PC-9 (cell line): ENCODE measurements at regions of chr9 and their contacts with region 1.

Region 1: GRCh38 chr9:112112941-112113681 is 62.0 kb downstream of the SUSD1 start:
- DNase-seq: peak; percentile 73 to 87
- H3K4me3 ChIP-seq: no peak overlapping the region
- H3K27ac ChIP-seq: peak overlapping the region; percentile 95
- H3K4me1 ChIP-seq: peaks cover 62% of the 10 kb centered on the region
- H3K27me3 ChIP-seq: no peaks in the 10 kb centered on the region
- CTCF ChIP-seq: peak; percentile 85

Region 2: DNA sequence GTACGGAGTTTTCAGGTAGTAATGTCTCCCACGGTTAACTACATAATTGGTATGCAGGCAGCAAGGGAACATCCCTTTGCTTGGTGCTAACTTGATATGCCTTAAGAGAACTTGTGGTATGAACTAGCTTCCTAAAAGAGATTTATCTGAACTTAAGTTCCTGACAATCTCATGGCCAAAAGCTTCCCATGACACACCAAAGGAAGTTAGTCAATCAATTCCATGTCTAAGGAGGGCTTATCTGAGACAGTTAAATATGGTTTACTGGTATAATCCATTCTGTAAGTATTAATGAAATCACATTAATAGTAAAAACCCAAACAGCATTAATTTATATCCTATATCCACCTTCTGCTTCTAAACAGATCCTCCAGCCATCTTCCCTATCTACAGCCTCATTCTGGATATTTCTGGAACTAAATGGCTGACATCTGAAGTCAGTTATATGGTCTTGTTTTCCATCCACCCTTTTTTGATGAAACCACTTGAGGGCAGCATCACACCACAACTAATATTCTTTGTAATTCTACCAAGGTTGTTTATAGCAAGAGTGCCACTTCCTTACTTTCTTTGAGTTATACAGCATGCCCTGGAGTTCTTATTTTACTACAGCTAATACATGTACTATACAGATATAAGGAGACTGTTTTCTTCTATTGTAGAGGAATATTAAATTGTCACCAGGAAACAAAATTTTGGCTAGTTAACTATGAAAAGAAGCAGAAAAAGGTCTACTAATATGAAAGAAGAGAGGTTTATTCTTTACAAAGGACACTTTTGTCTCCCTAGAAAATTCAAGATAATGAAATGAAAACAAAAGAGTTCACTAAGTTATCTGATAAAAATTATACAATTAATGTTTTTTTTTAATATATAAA is 353.1 kb before region 1 on chr9:
- CTCF ChIA-PET with region 1: interaction called, 4 read pairs
- POLR2A ChIA-PET with region 1: no interaction called
- intact Hi-C with region 1: loop called (anchors 1 kb)
- DNase-seq: peak; percentile 53 to 73
- H3K4me3 ChIP-seq: no peak overlapping the region
- H3K27ac ChIP-seq: no peak overlapping the region
- H3K4me1 ChIP-seq: peaks cover 6% of the 10 kb centered on the region; the same call in 1 of the 2 replicates
- H3K27me3 ChIP-seq: no peaks in the 10 kb centered on the region
- CTCF ChIP-seq: peak; percentile 81

Region 3: DNA sequence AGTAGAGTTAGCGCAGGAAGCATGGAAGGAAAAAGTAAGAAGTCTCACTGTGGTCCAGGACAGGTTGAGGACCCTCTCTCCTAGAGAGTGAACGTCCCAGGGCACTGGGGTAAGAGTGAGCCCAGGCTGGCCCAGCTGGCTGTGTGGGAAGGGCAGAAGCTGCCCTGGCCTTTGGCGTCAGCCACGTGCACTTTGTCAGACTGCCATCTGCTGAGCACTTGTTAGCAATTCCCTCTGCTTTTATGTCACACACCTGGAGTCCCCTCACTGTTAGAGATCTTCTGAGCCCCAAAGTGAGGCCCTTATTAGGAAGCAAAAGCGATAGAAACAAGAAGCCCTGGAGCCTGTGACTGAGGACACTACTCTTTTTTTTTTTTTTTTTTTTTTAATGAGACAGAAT is 137.4 kb before region 1 on chr9:
- CTCF ChIA-PET with region 1: no interaction called
- POLR2A ChIA-PET with region 1: no interaction called
- intact Hi-C with region 1: no loop called
- DNase-seq: no peak
- H3K4me3 ChIP-seq: no peak overlapping the region
- H3K27ac ChIP-seq: no peak overlapping the region
- H3K4me1 ChIP-seq: peaks cover 17% of the 10 kb centered on the region
- H3K27me3 ChIP-seq: no peaks in the 10 kb centered on the region
- CTCF ChIP-seq: no peak

Region 4: DNA sequence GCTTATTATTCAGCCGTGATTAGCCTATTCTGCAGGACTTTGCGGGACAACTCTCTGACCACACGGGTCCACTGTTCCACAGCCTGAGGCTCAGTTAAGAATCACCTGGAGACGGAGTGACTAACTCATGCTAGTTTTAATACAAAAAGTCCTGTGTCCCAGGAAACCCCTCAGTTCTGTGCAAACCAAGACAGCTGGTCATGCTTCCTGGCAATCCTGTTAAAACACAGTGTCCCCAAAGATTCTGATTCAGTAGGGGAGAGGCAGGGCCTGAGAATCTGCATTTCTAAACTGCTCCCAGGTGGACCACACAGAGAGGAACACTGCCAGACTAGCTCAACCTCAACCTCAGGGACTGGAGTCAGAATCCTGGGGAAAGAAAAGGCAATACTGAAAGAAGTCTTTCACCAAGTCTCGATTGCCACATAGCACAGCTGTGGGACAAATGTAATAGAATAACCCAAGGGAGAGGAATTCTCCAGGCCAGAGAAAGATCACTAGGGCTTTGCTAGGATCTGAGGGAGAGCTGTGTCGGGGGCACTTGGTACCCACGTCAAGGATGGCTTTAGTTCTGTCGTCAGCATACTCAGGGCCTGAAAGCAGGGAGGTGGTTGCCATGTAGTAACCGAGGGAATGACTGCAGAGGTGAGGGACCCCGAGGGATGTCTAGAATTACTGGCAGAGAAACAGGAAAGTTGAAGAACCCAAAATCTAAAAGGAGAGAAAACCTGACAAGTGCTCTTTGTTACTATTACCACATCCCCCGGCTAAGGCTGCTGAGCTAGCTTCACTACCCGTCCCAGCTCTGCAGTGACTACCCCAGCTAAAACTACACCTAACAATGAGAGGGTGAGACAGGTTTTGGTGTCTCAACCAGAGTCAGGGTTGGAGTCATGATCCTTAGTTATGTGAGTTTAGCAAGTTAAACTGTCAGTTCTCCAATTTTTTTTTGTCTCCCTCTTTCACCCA is 53.3 kb after region 1 on chr9:
- CTCF ChIA-PET with region 1: no interaction called
- POLR2A ChIA-PET with region 1: no interaction called
- intact Hi-C with region 1: loop called (anchors 2 kb)
- DNase-seq: peak; percentile 61 to 83
- H3K4me3 ChIP-seq: no peak overlapping the region
- H3K27ac ChIP-seq: peak overlapping the region; percentile 70
- H3K4me1 ChIP-seq: peaks cover 60% of the 10 kb centered on the region
- H3K27me3 ChIP-seq: no peaks in the 10 kb centered on the region
- CTCF ChIP-seq: no peak; the same call in 1 of the 2 replicates

Region 5: GRCh38 chr9:112218908-112219307 is 105.8 kb after region 1 on chr9:
- CTCF ChIA-PET with region 1: no interaction called
- POLR2A ChIA-PET with region 1: no interaction called
- intact Hi-C with region 1: loop called (anchors 10 kb)
- DNase-seq: no peak
- H3K4me3 ChIP-seq: no peak overlapping the region
- H3K27ac ChIP-seq: no peak overlapping the region
- H3K4me1 ChIP-seq: no peaks in the 10 kb centered on the region
- H3K27me3 ChIP-seq: no peaks in the 10 kb centered on the region
- CTCF ChIP-seq: no peak

Region 6: GRCh38 chr9:112379177-112380101 is 266.3 kb after region 1 on chr9:
- CTCF ChIA-PET with region 1: interaction called, 12 read pairs
- POLR2A ChIA-PET with region 1: no interaction called
- intact Hi-C with region 1: loop called (anchors 5 kb)
- DNase-seq: peak; percentile 92 to 100
- H3K4me3 ChIP-seq: peak overlapping the region; percentile 95
- H3K27ac ChIP-seq: peak overlapping the region; percentile 75
- H3K4me1 ChIP-seq: peaks cover 28% of the 10 kb centered on the region
- H3K27me3 ChIP-seq: no peaks in the 10 kb centered on the region
- CTCF ChIP-seq: no peak

Region 7: GRCh38 chr9:112711050-112711689 is 598.1 kb after region 1 on chr9:
- CTCF ChIA-PET with region 1: no interaction called
- POLR2A ChIA-PET with region 1: no interaction called
- intact Hi-C with region 1: loop called (anchors 5 kb)
- DNase-seq: peak in 1 of 2 experiments; percentile 9
- H3K4me3 ChIP-seq: no peak overlapping the region
- H3K27ac ChIP-seq: no peak overlapping the region
- H3K4me1 ChIP-seq: peaks cover 2% of the 10 kb centered on the region; the same call in 1 of the 2 replicates
- H3K27me3 ChIP-seq: no peaks in the 10 kb centered on the region
- CTCF ChIP-seq: peak; percentile 67